ENCODE measurements at regions of chr11 and their contacts with region 1.

Region 1: GRCh38 chr11:120303004-120303637 is 22.0 kb upstream of the TLCD5 start:
- DNase-seq: peak; percentile 64 to 71
- H3K4me3 ChIP-seq: no peak overlapping the region
- H3K27ac ChIP-seq: no peak overlapping the region
- H3K4me1 ChIP-seq: peaks cover 0 to 36% (median 17%) of the 10 kb centered on the region in 4 donors
- H3K27me3 ChIP-seq: peaks cover 0 to 4% of the 10 kb centered on the region in 2 donors
- CTCF ChIP-seq: peak; percentile 74 to 82

Region 2: GRCh38 chr11:120236562-120237107 is 66.5 kb before region 1 on chr11:
- intact Hi-C with region 1: loop called (anchors 2 kb)
- DNase-seq: no peak
- H3K4me3 ChIP-seq: no peak overlapping the region
- H3K27ac ChIP-seq: no peak overlapping the region
- H3K4me1 ChIP-seq: peaks cover 0 to 16% (median 5%) of the 10 kb centered on the region in 4 donors
- H3K27me3 ChIP-seq: peaks cover 0 to 58% of the 10 kb centered on the region in 2 donors
- CTCF ChIP-seq: no peak

Measured in tibial artery (tissue), 4 donors.